ENCODE measurements at regions of chr3 and their contacts with region 1.

Region 1: GRCh38 chr3:46089237-46090011 is 62.1 kb upstream of the XCR1 start:
- DNase-seq: peak; percentile 99 to 100 (median 100)
- H3K4me3 ChIP-seq: peak overlapping the region in 1 of 3 experiments; percentile 3
- H3K4me3 Mint-ChIP-seq: peak overlapping the region; percentile 18 to 77
- H3K27ac ChIP-seq: peak overlapping the region; percentile 100
- H3K27ac Mint-ChIP-seq: peak overlapping the region; percentile 100
- H3K4me1 ChIP-seq: peaks cover 62 to 63% of the 10 kb centered on the region in 2 donors
- H3K4me1 Mint-ChIP-seq: peaks cover 79% of the 10 kb centered on the region
- H3K27me3 ChIP-seq: no peaks in the 10 kb centered on the region
- H3K27me3 Mint-ChIP-seq: peaks cover 0 to 8% (median 4%) of the 10 kb centered on the region in 3 donors
- CTCF ChIP-seq: no peak

Region 2: DNA sequence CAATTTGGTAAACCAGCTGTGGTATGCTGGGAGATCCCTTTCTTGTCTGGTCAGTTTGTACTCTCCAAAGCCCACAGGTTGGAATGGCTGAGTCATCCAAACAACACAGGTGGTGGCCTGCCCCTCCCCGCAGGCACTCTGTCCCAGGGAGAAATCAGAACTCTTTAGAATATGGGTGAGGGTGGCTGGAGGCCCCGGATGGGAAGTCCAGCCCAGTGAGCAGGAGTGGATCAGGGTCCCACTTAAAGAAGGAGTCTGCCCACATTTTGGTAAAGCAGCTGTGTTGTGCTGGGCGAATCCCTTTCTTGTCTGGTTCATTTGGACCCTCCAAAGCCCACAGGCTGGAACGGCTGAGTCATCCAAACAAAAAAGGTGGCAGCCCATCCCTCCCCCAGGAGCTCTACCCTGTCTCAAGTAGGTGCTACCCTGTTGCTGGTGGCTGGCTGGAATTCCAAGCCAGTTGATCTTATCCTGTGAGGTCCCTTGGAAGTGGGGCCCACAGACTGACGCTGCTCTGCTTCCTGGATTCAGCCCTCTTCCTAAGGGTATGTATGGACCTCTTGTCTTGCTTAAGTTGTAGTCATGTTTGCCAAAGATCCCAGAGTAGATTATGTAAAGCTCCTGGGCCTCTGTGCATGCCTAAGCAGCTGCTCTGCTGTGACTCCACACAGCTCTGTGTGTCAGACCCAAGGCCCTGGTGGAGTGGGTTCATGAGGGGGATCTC is 74.1 kb after region 1 on chr3:
- intact Hi-C with region 1: no loop called
- DNase-seq: no peak
- H3K4me3 ChIP-seq: no peak overlapping the region
- H3K4me3 Mint-ChIP-seq: no peak overlapping the region
- H3K27ac ChIP-seq: no peak overlapping the region
- H3K27ac Mint-ChIP-seq: peak overlapping the region in 2 of 7 donors; percentile 32 to 87
- H3K4me1 ChIP-seq: peaks cover 12 to 13% of the 10 kb centered on the region in 2 donors
- H3K4me1 Mint-ChIP-seq: peaks cover 16% of the 10 kb centered on the region
- H3K27me3 ChIP-seq: no peaks in the 10 kb centered on the region
- H3K27me3 Mint-ChIP-seq: no peaks in the 10 kb centered on the region
- CTCF ChIP-seq: no peak

Region 3: GRCh38 chr3:46193436-46193835 is 104.0 kb after region 1 on chr3:
- intact Hi-C with region 1: loop called in 1 of 2 experiments (anchors 5 kb)
- DNase-seq: peak; percentile 83 to 94 (median 93)
- H3K4me3 ChIP-seq: peak overlapping the region in 1 of 3 experiments; percentile 34
- H3K4me3 Mint-ChIP-seq: peak overlapping the region in 1 of 2 donors; percentile 72
- H3K27ac ChIP-seq: peak overlapping the region; percentile 67 to 81
- H3K27ac Mint-ChIP-seq: peak overlapping the region; percentile 90 to 98 (median 98)
- H3K4me1 ChIP-seq: peaks cover 49 to 65% of the 10 kb centered on the region in 2 donors
- H3K4me1 Mint-ChIP-seq: peaks cover 44% of the 10 kb centered on the region
- H3K27me3 ChIP-seq: no peaks in the 10 kb centered on the region
- H3K27me3 Mint-ChIP-seq: no peaks in the 10 kb centered on the region
- CTCF ChIP-seq: no peak

Region 4: DNA sequence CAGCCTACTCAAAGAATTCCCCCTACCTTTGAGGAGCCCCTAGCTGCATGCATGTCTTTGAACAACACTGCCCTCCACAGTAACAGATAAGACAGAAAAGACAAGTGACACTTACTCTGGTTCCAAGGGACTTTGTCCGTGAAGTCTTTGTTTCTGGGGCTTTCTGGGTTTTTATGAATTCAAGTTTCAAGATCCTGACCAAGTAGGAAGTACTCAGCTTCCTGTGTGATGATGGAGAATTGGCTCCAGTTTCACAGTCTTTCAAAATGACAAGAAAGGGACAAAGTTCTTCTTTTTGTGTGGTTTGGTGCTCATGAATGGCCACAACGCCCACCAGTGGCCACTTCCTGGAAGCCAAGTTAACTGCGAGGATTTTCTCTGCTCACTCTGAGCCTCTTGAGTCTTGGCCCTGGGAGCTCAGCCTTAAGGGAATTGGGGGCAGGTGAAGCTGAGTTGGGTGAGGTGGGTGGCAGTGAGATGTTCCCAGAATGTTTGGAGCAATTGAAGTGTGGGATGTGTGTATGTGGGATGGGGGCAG is 118.8 kb after region 1 on chr3 and contains the start of gene CCR1:
- intact Hi-C with region 1: loop called (anchors 5 kb)
- DNase-seq: peak; percentile 88 to 93 (median 91)
- H3K4me3 ChIP-seq: peak within 1 kb of the TSS; percentile 70 to 99 (median 82)
- H3K4me3 Mint-ChIP-seq: peak within 1 kb of the TSS; percentile 94 to 97
- H3K27ac ChIP-seq: peak within 1 kb of the TSS; percentile 84 to 96
- H3K27ac Mint-ChIP-seq: peak within 1 kb of the TSS; percentile 96 to 100 (median 99)
- H3K4me1 ChIP-seq: peaks cover 77 to 86% of the 10 kb centered on the region in 2 donors
- H3K4me1 Mint-ChIP-seq: peaks cover 69% of the 10 kb centered on the region
- H3K27me3 ChIP-seq: no peaks in the 10 kb centered on the region
- H3K27me3 Mint-ChIP-seq: peaks cover 0 to 2% (median 0%) of the 10 kb centered on the region in 3 donors
- CTCF ChIP-seq: peak; percentile 66
- polyA plus RNA-seq, gene CCR1: 56.7 to 304 (median 233) TPM

Region 5: GRCh38 chr3:46272028-46272451 is 182.6 kb after region 1 on chr3:
- intact Hi-C with region 1: no loop called
- DNase-seq: no peak
- H3K4me3 ChIP-seq: no peak overlapping the region
- H3K4me3 Mint-ChIP-seq: peak overlapping the region in 1 of 2 donors; percentile 35
- H3K27ac ChIP-seq: no peak overlapping the region
- H3K27ac Mint-ChIP-seq: peak overlapping the region in 1 of 7 donors; percentile 51
- H3K4me1 ChIP-seq: peaks cover 8 to 9% of the 10 kb centered on the region in 2 donors
- H3K4me1 Mint-ChIP-seq: peaks cover 19% of the 10 kb centered on the region
- H3K27me3 ChIP-seq: no peaks in the 10 kb centered on the region
- H3K27me3 Mint-ChIP-seq: peaks cover 0 to 3% (median 3%) of the 10 kb centered on the region in 3 donors
- CTCF ChIP-seq: no peak

Region 6: DNA sequence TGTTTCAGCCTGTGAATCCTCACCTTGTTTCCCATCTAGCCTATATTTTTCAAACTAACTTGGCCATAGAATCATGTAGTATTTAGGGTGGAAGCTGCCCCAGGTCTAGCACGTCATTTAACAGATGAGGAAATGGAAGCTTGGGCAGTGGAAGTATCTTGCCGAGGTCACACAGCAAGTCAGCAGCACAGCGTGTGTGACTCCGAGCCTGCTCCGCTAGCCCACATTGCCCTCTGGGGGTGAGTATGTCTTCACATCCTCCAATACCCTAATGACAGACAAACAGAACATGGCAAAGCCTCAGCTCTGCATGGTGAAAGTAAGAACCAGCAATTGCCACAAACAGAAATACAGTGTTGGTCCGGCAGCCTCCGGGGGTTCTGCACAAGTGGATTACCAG is 279.1 kb after region 1 on chr3:
- intact Hi-C with region 1: loop called (anchors 5 kb)
- DNase-seq: peak; percentile 90 to 94 (median 91)
- H3K4me3 ChIP-seq: peak overlapping the region in 1 of 3 experiments; percentile 19
- H3K4me3 Mint-ChIP-seq: peak overlapping the region in 1 of 2 donors; percentile 46
- H3K27ac ChIP-seq: peak overlapping the region in 1 of 2 donors; percentile 80
- H3K27ac Mint-ChIP-seq: peak overlapping the region; percentile 81 to 92 (median 86)
- H3K4me1 ChIP-seq: peaks cover 48 to 71% of the 10 kb centered on the region in 2 donors
- H3K4me1 Mint-ChIP-seq: peaks cover 66% of the 10 kb centered on the region
- H3K27me3 ChIP-seq: no peaks in the 10 kb centered on the region
- H3K27me3 Mint-ChIP-seq: no peaks in the 10 kb centered on the region
- CTCF ChIP-seq: peak; percentile 71

Region 7: GRCh38 chr3:46406788-46407611 is 317.6 kb after region 1 on chr3 and contains the starts of genes CCR5AS and CCRL2:
- intact Hi-C with region 1: loop called (anchors 2 kb)
- DNase-seq: peak; percentile 91 to 98 (median 94)
- H3K4me3 ChIP-seq: peak within 1 kb of the TSS; percentile 34 to 74 (median 55)
- H3K4me3 Mint-ChIP-seq: peak within 1 kb of the TSS; percentile 81 to 95
- H3K27ac ChIP-seq: peak within 1 kb of the TSS; percentile 97 to 100
- H3K27ac Mint-ChIP-seq: peak within 1 kb of the TSS; percentile 100
- H3K4me1 ChIP-seq: peaks cover 43 to 47% of the 10 kb centered on the region in 2 donors
- H3K4me1 Mint-ChIP-seq: peaks cover 58% of the 10 kb centered on the region
- H3K27me3 ChIP-seq: no peaks in the 10 kb centered on the region
- H3K27me3 Mint-ChIP-seq: peaks cover 0 to 7% (median 0%) of the 10 kb centered on the region in 3 donors
- CTCF ChIP-seq: no peak
- polyA plus RNA-seq, gene CCRL2: 10.2 to 15.3 (median 11.7) TPM

Region 8: DNA sequence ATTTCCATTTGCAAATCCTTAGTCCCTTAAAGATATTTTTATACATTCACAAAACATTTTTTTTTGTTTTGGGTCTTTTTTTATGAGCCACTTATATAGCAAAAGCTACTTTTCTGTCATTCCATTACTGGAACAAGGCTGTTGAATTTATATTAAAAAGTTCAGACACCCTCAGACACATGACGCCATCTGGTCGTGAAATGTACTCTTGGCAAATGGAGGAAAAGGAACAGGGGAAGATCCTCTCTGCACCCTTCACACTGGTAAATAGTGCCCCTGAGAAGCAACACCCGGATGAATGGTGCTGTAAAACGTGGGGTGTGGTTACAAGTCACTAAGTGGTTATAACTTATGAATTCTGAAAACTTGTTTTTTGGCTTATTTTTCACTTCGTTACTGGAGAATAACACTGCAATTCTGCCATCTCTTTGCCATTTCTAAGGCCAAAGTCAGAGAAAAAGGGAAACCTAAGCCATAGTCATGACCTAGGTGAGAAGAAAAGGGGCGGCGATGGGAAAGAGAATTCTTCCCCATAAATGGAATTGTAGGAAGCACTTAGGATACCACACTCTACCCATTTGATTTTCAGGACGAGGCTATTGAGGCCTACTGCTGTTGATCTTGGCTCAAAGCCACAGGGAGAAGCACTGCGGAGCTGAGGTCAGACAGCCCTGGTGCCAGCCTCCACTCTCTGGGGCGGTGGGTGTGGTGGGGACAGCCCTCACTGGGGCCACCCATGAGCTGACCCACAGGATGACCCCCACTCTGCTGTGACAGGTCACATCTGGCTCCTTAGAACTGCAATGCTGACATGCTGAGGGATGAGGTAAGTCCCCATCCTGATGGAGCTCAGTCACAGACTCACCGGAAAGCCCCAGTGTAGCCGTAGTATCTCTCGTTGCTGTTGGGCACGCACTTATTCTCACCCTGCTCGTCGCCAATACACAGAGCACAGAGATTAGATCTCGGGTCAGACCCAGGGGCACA is 353.4 kb after region 1 on chr3:
- intact Hi-C with region 1: loop called in 1 of 2 experiments (anchors 5 kb)
- DNase-seq: peak; percentile 40 to 69 (median 60)
- H3K4me3 ChIP-seq: no peak overlapping the region
- H3K4me3 Mint-ChIP-seq: no peak overlapping the region
- H3K27ac ChIP-seq: no peak overlapping the region
- H3K27ac Mint-ChIP-seq: no peak overlapping the region
- H3K4me1 ChIP-seq: peaks cover 9 to 10% of the 10 kb centered on the region in 2 donors
- H3K4me1 Mint-ChIP-seq: peaks cover 25% of the 10 kb centered on the region
- H3K27me3 ChIP-seq: no peaks in the 10 kb centered on the region
- H3K27me3 Mint-ChIP-seq: peaks cover 0 to 2% (median under 1%) of the 10 kb centered on the region in 3 donors
- CTCF ChIP-seq: peak; percentile 88

Measured in CD14-positive monocyte (primary cell).